GM10248 (cell line): ENCODE measurements at regions of chr15 and their contacts with region 1.

Region 1: GRCh38 chr15:41904541-41905005 is 10.7 kb upstream of the SPTBN5 start:
- DNase-seq: peak; percentile 84
- CTCF ChIP-seq: peak; percentile 87

Region 2: DNA sequence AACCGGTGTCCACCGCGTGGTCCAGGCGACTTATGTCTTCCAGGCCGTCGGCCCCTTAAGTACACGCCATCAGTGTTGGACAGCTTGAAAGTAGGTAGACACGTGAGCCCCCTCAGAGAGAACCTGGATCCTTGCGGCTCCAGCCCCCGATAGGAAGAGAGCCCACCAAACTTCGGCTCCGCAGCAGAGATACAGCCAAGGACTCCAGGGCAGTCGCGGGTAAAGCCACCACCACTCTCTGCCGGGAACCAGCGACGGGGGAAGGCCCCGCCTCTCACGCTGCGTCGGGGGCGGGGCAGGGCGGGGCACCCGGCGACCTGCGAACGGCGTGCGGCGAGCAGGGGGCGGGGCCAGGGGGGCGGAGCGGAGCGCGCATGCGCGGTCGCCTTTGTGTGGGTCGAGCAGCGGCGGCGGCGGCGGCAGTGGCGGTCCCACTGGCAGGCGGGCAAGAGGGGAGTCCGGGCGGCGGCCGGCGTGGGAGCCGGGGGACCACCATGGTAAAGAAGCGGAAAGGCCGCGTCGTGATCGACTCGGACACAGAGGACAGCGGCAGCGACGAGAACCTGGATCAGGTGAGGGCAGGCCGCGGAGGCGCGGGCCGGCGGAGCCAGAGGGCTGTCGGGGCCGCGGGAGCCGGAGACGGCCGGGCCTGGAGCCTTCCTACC is 487.7 kb before region 1 on chr15 and contains the start of gene RTF1:
- CTCF ChIA-PET with region 1: no interaction called
- POLR2A ChIA-PET with region 1: no interaction called
- DNase-seq: peak; percentile 98
- CTCF ChIP-seq: no peak

Region 3: GRCh38 chr15:41917767-41918430 is 13.3 kb after region 1 on chr15:
- CTCF ChIA-PET with region 1: interaction called, 24 read pairs
- POLR2A ChIA-PET with region 1: no interaction called
- DNase-seq: no peak
- CTCF ChIP-seq: no peak

Region 4: GRCh38 chr15:41979521-41980263 is 75.1 kb after region 1 on chr15:
- CTCF ChIA-PET with region 1: no interaction called
- POLR2A ChIA-PET with region 1: no interaction called
- DNase-seq: no peak
- CTCF ChIP-seq: no peak